Naive thymus-derived CD4-positive, alpha-beta T cell (primary cell): ENCODE measurements at regions of chr10 and their contacts with region 1.

Region 1: DNA sequence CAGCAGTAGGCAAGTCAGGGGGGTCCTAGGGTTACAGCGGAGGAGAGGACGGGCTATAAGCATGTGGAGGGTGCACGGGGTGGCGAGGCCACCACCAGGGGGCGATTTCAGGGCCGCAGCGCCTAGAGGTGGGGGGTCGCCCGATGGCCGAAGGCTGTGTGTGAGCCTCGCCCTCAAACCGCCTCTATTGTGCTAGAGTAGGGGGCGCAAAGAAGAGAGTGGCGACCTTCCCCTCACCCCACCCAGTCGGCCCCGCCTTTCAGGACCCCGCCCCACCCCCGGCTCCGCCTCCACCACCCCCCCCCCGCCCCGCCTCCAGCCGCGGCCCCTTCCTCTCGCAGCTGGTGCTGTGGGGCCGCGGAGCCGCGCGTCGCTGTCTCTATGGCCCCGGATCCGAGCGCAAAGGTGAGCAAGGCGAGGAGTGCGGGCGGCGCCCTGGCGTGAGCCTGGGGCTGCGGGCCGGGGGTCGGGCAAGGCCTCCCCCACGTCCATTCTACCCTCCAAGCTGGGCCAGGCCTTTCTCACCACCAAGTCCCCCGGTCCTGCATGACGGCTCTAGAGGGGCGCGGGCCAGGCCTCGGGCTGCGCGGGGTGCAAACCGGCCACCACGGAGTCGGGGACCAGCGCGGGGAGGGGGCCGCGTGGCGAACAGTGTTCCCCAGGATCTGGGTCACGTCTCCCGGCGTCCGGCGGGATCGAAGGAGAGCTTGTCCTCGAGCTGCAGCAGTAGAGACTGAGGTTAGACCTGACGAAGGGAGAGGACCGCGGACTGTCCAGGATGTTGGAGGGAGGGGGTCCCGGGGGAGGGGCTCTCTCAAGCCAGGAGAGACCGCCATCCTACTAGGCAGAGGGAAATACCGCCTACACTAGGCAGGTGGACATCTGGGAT is at the start of gene SEMA4G:
- DNase-seq: peak in 8 of 9 donors; percentile 26 to 53 (median 38)
- ATAC-seq: peak; percentile 79
- H3K4me3 ChIP-seq: peak within 1 kb of the TSS; percentile 49
- H3K4me3 Mint-ChIP-seq: peak within 1 kb of the TSS; percentile 53 to 81 (median 73)
- H3K27ac ChIP-seq: peak within 1 kb of the TSS; percentile 30
- H3K27ac Mint-ChIP-seq: peak within 1 kb of the TSS in 3 of 9 donors; percentile 1 to 83 (median 24)
- H3K4me1 ChIP-seq: peaks cover 4 to 12% of the 10 kb centered on the region in 2 donors
- H3K4me1 Mint-ChIP-seq: peaks cover 4 to 18% (median 14%) of the 10 kb centered on the region in 7 donors
- H3K27me3 ChIP-seq: no peaks in the 10 kb centered on the region
- H3K27me3 Mint-ChIP-seq: peaks cover 0 to 5% (median 0%) of the 10 kb centered on the region in 5 donors
- total RNA-seq, gene SEMA4G: 0.78 to 1.7 (median 1.2) TPM

Region 2: GRCh38 chr10:100864978-100865377 is 104.5 kb before region 1 on chr10:
- CTCF ChIA-PET with region 1: no interaction called
- POLR2A ChIA-PET with region 1: no interaction called
- intact Hi-C with region 1: no loop called
- DNase-seq: no peak
- ATAC-seq: no peak
- H3K4me3 ChIP-seq: no peak overlapping the region
- H3K4me3 Mint-ChIP-seq: no peak overlapping the region
- H3K27ac ChIP-seq: no peak overlapping the region
- H3K27ac Mint-ChIP-seq: no peak overlapping the region
- H3K4me1 ChIP-seq: no peaks in the 10 kb centered on the region
- H3K4me1 Mint-ChIP-seq: peaks cover 0 to 6% (median 5%) of the 10 kb centered on the region in 7 donors
- H3K27me3 ChIP-seq: peaks cover 0 to 3% of the 10 kb centered on the region in 2 donors
- H3K27me3 Mint-ChIP-seq: peaks cover 39 to 60% (median 40%) of the 10 kb centered on the region in 5 donors

Region 3: GRCh38 chr10:100986952-100987750 is 17.7 kb after region 1 on chr10 and contains the starts of genes MRPL43 and TWNK:
- CTCF ChIA-PET with region 1: interaction called, 4 read pairs
- POLR2A ChIA-PET with region 1: interaction called, 3 read pairs
- intact Hi-C with region 1: loop called (anchors 1 kb)
- DNase-seq: peak; percentile 68 to 88 (median 84)
- ATAC-seq: peak; percentile 94
- H3K4me3 ChIP-seq: peak within 1 kb of the TSS; percentile 89
- H3K4me3 Mint-ChIP-seq: peak within 1 kb of the TSS; percentile 91 to 100 (median 95)
- H3K27ac ChIP-seq: peak within 1 kb of the TSS; percentile 81
- H3K27ac Mint-ChIP-seq: peak within 1 kb of the TSS; percentile 80 to 98 (median 92)
- H3K4me1 ChIP-seq: peaks cover 17 to 24% of the 10 kb centered on the region in 2 donors
- H3K4me1 Mint-ChIP-seq: peaks cover 23 to 60% (median 38%) of the 10 kb centered on the region in 7 donors
- H3K27me3 ChIP-seq: no peaks in the 10 kb centered on the region
- H3K27me3 Mint-ChIP-seq: no peaks in the 10 kb centered on the region
- total RNA-seq, gene MRPL43: 35.8 to 74.5 (median 46.5) TPM
- total RNA-seq, gene TWNK: 5.8 to 17.3 (median 14.8) TPM

Region 4: GRCh38 chr10:101012525-101013364 is 43.3 kb after region 1 on chr10:
- CTCF ChIA-PET with region 1: interaction called, 18 read pairs
- POLR2A ChIA-PET with region 1: no interaction called
- intact Hi-C with region 1: loop called (anchors 1 to 2 kb)
- DNase-seq: peak; percentile 46 to 76 (median 63)
- ATAC-seq: peak; percentile 91
- H3K4me3 ChIP-seq: no peak overlapping the region
- H3K4me3 Mint-ChIP-seq: peak overlapping the region in 1 of 10 donors; percentile 24
- H3K27ac ChIP-seq: no peak overlapping the region
- H3K27ac Mint-ChIP-seq: peak overlapping the region in 3 of 9 donors; percentile 8 to 75 (median 41)
- H3K4me1 ChIP-seq: peaks cover 0 to 5% of the 10 kb centered on the region in 2 donors
- H3K4me1 Mint-ChIP-seq: peaks cover 9 to 21% (median 17%) of the 10 kb centered on the region in 7 donors
- H3K27me3 ChIP-seq: no peaks in the 10 kb centered on the region
- H3K27me3 Mint-ChIP-seq: peaks cover 22 to 39% (median 30%) of the 10 kb centered on the region in 5 donors

Region 5: GRCh38 chr10:101867931-101868330 is 898.5 kb after region 1 on chr10:
- CTCF ChIA-PET with region 1: no interaction called
- POLR2A ChIA-PET with region 1: no interaction called
- intact Hi-C with region 1: no loop called
- DNase-seq: no peak
- ATAC-seq: no peak
- H3K4me3 ChIP-seq: no peak overlapping the region
- H3K4me3 Mint-ChIP-seq: no peak overlapping the region
- H3K27ac ChIP-seq: no peak overlapping the region
- H3K27ac Mint-ChIP-seq: no peak overlapping the region
- H3K4me1 ChIP-seq: no peaks in the 10 kb centered on the region
- H3K4me1 Mint-ChIP-seq: peaks cover 0 to 2% (median 0%) of the 10 kb centered on the region in 7 donors
- H3K27me3 ChIP-seq: no peaks in the 10 kb centered on the region
- H3K27me3 Mint-ChIP-seq: no peaks in the 10 kb centered on the region